ENCODE measurements at regions of chr5 and their contacts with region 1.

Region 1: GRCh38 chr5:166317425-166317824 is 1974.0 kb upstream of the WWC1 start:
- DNase-seq: no peak
- H3K4me3 ChIP-seq: no peak overlapping the region
- H3K27ac ChIP-seq: no peak overlapping the region
- H3K4me1 ChIP-seq: no peaks in the 10 kb centered on the region
- H3K27me3 ChIP-seq: no peaks in the 10 kb centered on the region
- CTCF ChIP-seq: no peak
- POLR2A ChIP-seq: no peak

Region 2: GRCh38 chr5:167530548-167530947 is 1213.1 kb after region 1 on chr5:
- intact Hi-C with region 1: loop called (anchors 10 kb)
- DNase-seq: no peak
- H3K4me3 ChIP-seq: no peak overlapping the region
- H3K27ac ChIP-seq: no peak overlapping the region
- H3K4me1 ChIP-seq: no peaks in the 10 kb centered on the region
- H3K27me3 ChIP-seq: no peaks in the 10 kb centered on the region
- CTCF ChIP-seq: no peak
- POLR2A ChIP-seq: no peak

Measured in vagina (tissue), 2 donors.